ENCODE measurements at regions of chr11 and their contacts with region 1.

Region 1: GRCh38 chr11:27158722-27159679 is 118.4 kb downstream of the BBOX1 start:
- DNase-seq: peak; percentile 48
- H3K4me3 ChIP-seq: no peak overlapping the region
- H3K27ac ChIP-seq: no peak overlapping the region
- H3K27me3 ChIP-seq: no peaks in the 10 kb centered on the region
- CTCF ChIP-seq: peak; percentile 89

Region 2: DNA sequence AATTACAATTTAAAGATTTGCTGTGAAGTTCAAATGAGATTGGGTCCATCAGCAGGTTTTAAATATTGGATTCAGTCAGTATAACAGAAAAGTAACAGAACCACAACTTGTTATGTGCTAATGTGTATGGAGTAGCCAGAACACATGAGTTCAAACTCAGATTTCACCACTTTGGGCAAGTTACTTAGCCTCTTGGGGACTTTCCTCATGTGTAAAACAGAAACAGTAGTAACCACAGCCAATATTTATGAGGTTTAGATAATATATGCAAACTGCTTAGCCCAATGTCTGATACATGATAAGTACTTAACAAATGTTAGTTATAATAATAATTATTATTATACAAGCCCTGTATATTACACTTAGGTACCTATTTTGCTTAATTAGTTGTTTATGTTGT is 415.4 kb before region 1 on chr11:
- CTCF ChIA-PET with region 1: interaction called, 20 read pairs
- POLR2A ChIA-PET with region 1: no interaction called
- DNase-seq: no peak
- H3K4me3 ChIP-seq: no peak overlapping the region
- H3K27ac ChIP-seq: no peak overlapping the region
- H3K27me3 ChIP-seq: no peaks in the 10 kb centered on the region
- CTCF ChIP-seq: no peak

Region 3: DNA sequence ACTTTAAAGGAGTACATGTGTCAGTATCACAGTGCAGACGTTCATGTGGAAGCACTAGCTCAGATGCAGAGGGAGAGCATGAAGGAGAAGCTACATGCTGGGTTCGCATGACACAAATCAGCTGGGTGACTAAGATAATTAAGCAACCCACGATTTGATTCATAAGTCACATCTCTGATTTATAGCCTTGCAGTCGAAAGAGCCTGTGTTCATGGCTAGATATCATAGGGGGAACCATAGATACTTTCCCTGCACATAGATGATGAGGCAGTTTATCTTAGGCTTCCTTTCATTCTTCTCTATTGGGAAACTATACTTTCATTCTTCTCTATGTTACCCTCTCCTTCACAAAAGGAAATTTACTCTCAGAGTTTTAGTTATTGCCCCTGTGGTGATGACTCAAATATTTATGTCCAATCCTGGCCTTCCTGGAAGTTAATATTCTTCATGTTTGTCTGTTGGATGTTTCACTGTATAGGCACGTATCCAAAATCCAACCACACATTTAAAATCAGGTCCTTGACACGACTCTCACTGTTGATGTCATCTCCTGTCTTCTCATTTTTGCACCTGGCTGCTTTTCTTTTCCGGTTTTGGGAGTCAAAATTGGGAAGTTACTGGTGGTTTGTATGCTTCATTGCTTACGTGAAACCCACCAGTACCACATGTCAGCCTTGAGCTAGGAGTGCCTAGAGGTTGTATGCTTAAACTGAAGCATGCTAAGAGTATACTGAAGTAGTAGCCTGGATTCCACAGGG is 380.8 kb before region 1 on chr11:
- CTCF ChIA-PET with region 1: interaction called, 22 read pairs
- POLR2A ChIA-PET with region 1: no interaction called
- DNase-seq: peak; percentile 30
- H3K4me3 ChIP-seq: peak overlapping the region; percentile 30
- H3K27ac ChIP-seq: no peak overlapping the region
- H3K27me3 ChIP-seq: no peaks in the 10 kb centered on the region
- CTCF ChIP-seq: no peak

Region 4: DNA sequence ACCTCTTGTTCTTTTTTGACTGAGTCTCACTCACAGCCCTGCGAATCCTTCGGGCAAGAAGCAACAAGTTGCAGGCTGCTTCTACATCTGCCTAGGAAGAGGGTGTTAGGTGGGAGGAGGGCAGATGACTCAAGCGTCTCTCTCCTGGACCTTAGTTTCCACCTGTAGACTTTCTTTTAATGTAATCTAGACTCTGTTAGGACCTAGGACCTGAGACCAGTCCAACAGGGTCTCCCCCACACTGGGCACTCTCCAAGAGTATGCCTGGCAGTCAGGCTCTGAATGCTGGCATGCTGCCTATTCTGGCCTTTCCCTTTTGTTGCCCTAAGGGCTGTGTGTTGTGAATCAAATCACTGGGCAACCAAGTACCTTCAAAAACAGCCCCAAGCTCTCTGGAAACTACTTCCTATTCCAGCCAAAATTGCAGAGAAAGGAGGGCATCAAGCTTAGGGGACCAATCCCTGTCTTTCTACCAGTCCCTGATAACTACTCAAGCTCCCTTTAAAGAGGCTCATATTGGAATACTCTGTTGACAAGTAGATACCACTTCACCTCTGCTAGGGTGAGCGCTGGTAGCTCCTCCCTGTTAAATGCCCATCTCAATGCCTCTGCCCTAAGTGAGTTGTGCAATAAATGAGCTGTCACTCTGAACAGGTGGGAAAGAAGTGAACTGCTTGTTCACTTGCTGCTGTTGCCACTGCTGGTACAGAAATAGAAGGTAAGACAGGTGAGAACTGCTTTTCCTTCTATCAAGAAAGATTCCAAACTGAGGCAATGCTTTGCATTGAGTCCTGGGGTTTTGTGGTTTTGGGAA is 118.5 kb before region 1 on chr11 and contains the start of gene BBOX1:
- CTCF ChIA-PET with region 1: interaction called, 10 read pairs
- POLR2A ChIA-PET with region 1: no interaction called
- DNase-seq: no peak
- H3K4me3 ChIP-seq: no peak within 1 kb of the TSS
- H3K27ac ChIP-seq: no peak within 1 kb of the TSS
- H3K27me3 ChIP-seq: no peaks in the 10 kb centered on the region
- CTCF ChIP-seq: no peak
- polyA plus RNA-seq, gene BBOX1: 0.06 and 0.07 TPM in 2 replicates

Region 5: GRCh38 chr11:27139742-27140367 is 19.1 kb before region 1 on chr11:
- CTCF ChIA-PET with region 1: interaction called, 31 read pairs
- POLR2A ChIA-PET with region 1: no interaction called
- DNase-seq: peak; percentile 7
- H3K4me3 ChIP-seq: no peak overlapping the region
- H3K27ac ChIP-seq: no peak overlapping the region
- H3K27me3 ChIP-seq: no peaks in the 10 kb centered on the region
- CTCF ChIP-seq: no peak

Region 6: GRCh38 chr11:27497284-27497866 is 338.4 kb after region 1 on chr11:
- CTCF ChIA-PET with region 1: interaction called, 11 read pairs
- POLR2A ChIA-PET with region 1: no interaction called
- DNase-seq: no peak
- H3K4me3 ChIP-seq: no peak overlapping the region
- H3K27ac ChIP-seq: no peak overlapping the region
- H3K27me3 ChIP-seq: no peaks in the 10 kb centered on the region
- CTCF ChIP-seq: peak; percentile 44

Measured in AG04450 (cell line).